GM12878 (cell line): ENCODE measurements at regions of chr4 and their contacts with region 1.

Region 1: GRCh38 chr4:40576631-40577480 is 52.8 kb downstream of the RBM47 start:
- DNase-seq: peak; percentile 82
- ATAC-seq: peak; percentile 80
- H3K4me3 ChIP-seq: peak overlapping the region; percentile 35
- H3K27ac ChIP-seq: peak overlapping the region; percentile 89
- H3K4me1 ChIP-seq: peaks cover 57% of the 10 kb centered on the region
- H3K27me3 ChIP-seq: no peaks in the 10 kb centered on the region
- CTCF ChIP-seq: no peak
- EP300 ChIP-seq: peak in 1 of 2 experiments; percentile 63; a peak in 2 of 4 replicates
- POLR2A ChIP-seq: no peak
- RAD21 ChIP-seq: no peak

Region 2: DNA sequence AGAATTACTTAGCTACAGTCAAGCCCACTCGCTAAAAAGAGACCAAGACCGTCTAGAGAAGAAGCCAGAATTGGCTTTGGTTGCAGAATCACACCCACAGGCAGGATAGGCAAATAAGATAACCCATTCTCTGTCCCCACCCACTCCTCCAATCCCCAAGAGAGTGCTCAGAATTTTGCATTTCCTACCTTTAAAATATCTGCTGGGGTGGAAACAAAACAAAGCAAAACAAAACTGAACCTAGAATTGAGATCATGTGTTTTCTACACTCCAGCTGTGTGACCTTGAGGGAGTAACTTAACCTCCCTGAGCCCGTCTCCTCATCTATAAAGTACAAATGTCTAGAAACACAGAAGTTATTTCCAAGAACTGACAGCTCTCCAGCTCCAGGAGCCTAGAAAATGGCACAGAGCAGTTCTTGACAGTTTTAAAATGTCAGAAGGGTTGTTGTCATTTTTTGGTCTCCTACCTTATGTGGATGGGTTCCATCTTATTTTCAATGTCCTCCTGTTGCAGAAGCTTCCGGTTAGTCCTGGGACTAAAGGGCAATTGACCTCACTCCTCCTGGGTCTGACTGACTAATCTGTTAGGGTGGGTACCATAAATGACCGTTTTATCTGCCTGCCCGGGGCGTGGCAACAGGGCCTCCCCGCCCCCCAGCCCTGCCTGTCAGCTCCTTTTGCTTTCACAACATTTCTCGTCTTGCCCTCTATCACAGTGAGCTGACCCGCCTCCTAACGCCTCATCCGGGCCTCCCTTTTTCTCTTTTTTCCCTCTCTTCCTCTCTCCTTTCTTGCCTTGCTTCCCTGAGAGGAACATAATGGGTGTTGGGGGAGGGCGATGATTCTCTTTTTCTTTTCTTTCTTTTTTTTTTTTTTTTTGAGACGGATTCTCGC is 61.2 kb before region 1 on chr4:
- CTCF ChIA-PET with region 1: interaction called, 3 read pairs
- POLR2A ChIA-PET with region 1: interaction called, 4 read pairs
- RAD21 ChIA-PET with region 1: interaction called, 3 read pairs
- SMC1A ChIA-PET with region 1: interaction called, 4 read pairs
- in situ Hi-C with region 1: no loop called
- intact Hi-C with region 1: loop called (anchors 5 kb)
- DNase-seq: peak; percentile 95
- ATAC-seq: peak; percentile 87
- H3K4me3 ChIP-seq: peak overlapping the region; percentile 47; the same call in 1 of the 2 replicates
- H3K27ac ChIP-seq: peak overlapping the region; percentile 88
- H3K4me1 ChIP-seq: peaks cover 35% of the 10 kb centered on the region
- H3K27me3 ChIP-seq: no peaks in the 10 kb centered on the region
- CTCF ChIP-seq: no peak
- EP300 ChIP-seq: peak in 1 of 2 experiments; percentile 55; a peak in 1 of 4 replicates
- POLR2A ChIP-seq: no peak
- RAD21 ChIP-seq: no peak

Region 3: DNA sequence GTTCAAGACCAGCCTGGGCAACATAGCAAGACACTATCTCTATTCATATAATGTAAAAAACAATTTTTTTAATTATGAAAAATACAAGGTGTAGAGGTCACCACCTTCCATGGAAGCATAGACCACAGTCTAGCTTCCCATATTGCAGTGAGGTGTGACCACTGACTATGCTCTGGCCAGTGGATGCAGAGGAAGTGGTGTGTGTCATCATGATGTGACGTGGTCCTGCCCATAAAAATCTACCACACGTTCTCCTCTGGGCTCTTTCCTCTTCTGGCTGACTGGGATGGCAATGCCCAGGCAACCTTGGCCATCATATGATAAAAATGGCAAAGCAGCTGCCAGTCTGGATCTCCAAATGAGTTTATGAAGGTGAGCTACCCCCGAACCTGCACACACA is 12.9 kb before region 1 on chr4:
- CTCF ChIA-PET with region 1: interaction called, 28 read pairs
- POLR2A ChIA-PET with region 1: interaction called, 51 read pairs
- RAD21 ChIA-PET with region 1: interaction called, 28 read pairs
- SMC1A ChIA-PET with region 1: interaction called, 90 read pairs
- in situ Hi-C with region 1: no loop called
- intact Hi-C with region 1: no loop called
- DNase-seq: no peak
- ATAC-seq: peak; percentile 14
- H3K4me3 ChIP-seq: no peak overlapping the region
- H3K27ac ChIP-seq: peak overlapping the region; percentile 50
- H3K4me1 ChIP-seq: peaks cover 68% of the 10 kb centered on the region
- H3K27me3 ChIP-seq: no peaks in the 10 kb centered on the region
- CTCF ChIP-seq: no peak
- EP300 ChIP-seq: no peak
- POLR2A ChIP-seq: 0 out of 2 replicates have a peak, but pooled peaks have one; percentile 23
- RAD21 ChIP-seq: no peak

Region 4: GRCh38 chr4:40656201-40656901 is 79.5 kb after region 1 on chr4:
- CTCF ChIA-PET with region 1: no interaction called
- POLR2A ChIA-PET with region 1: interaction called, 4 read pairs
- RAD21 ChIA-PET with region 1: interaction called, 3 read pairs
- SMC1A ChIA-PET with region 1: interaction called, 14 read pairs
- in situ Hi-C with region 1: no loop called
- intact Hi-C with region 1: no loop called
- DNase-seq: peak; percentile 91
- ATAC-seq: peak; percentile 95
- H3K4me3 ChIP-seq: peak overlapping the region; percentile 35; the same call in 1 of the 2 replicates
- H3K27ac ChIP-seq: peak overlapping the region; percentile 97
- H3K4me1 ChIP-seq: peaks cover 35% of the 10 kb centered on the region
- H3K27me3 ChIP-seq: no peaks in the 10 kb centered on the region
- CTCF ChIP-seq: no peak
- EP300 ChIP-seq: peak in 1 of 2 experiments; percentile 79; a peak in 2 of 4 replicates
- POLR2A ChIP-seq: no peak
- RAD21 ChIP-seq: no peak